HEK293 (cell line): ENCODE measurements at regions of chr14 and their contacts with region 1.

Region 1: DNA sequence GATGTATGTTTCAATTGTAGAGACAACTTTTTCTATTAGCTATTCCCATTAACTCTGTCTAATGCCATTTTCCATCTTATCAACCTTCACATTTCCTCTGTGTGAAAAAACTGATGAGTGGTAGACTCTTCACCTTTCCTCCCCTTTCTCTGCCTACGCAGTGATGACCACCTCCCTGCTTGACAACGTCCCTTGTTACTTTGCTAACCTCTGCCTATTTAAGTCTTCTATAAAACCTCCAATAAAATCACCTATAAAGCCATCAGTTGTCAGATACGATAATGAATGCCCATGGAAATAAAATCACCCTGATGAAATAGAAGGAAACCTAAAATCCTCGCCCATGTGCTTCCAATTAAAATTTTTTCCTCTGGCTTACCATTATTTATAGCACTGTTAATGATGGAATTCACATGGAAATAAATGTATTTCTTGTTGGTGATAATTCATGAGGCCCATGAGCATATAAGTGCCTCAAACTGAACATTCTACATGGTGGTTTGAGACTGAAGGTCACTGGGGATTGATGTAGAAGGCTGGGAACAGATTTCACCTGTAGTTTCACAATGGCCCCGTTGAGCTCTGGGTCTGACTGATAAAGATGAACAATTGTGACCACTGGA is 1454.0 kb upstream of the SEL1L start:
- H3K4me3 ChIP-seq: no peak overlapping the region
- H3K27ac ChIP-seq: no peak overlapping the region
- H3K4me1 ChIP-seq: no peaks in the 10 kb centered on the region
- CTCF ChIP-seq: no peak

Region 2: GRCh38 chr14:82905762-82906161 is 81.9 kb before region 1 on chr14:
- CTCF ChIA-PET with region 1: no interaction called
- POLR2A ChIA-PET with region 1: no interaction called
- H3K4me3 ChIP-seq: no peak overlapping the region
- H3K27ac ChIP-seq: no peak overlapping the region
- H3K4me1 ChIP-seq: no peaks in the 10 kb centered on the region
- CTCF ChIP-seq: no peak

Region 3: DNA sequence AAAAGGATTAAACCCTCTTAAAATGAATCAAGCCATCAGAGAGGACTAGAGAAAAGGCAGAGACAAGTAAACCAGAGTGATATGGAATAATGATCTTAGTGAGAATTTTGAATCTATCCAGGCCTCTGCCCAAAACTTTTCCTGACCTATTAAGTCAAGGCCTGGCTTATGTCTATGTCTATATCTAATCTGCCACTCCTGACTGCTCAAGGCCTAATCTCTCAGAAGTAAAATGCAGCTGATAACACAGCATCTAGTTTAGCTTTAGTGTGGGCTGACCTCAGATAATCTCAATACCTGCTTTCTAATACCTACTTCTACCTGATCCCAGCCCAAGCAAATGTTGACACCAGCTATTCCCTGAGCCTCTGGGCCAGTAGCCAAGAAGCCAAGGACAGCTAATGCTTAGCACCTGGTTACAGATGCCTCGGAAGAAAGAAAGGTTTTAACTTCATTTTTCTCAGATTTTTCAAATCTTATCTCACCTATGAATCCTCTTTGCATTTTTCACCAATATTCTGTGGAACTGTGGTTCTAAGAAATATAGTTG is 18.6 kb after region 1 on chr14:
- CTCF ChIA-PET with region 1: no interaction called
- POLR2A ChIA-PET with region 1: no interaction called
- H3K4me3 ChIP-seq: no peak overlapping the region
- H3K27ac ChIP-seq: no peak overlapping the region
- H3K4me1 ChIP-seq: no peaks in the 10 kb centered on the region
- CTCF ChIP-seq: no peak

Region 4: GRCh38 chr14:83491091-83491490 is 503.5 kb after region 1 on chr14:
- CTCF ChIA-PET with region 1: no interaction called
- POLR2A ChIA-PET with region 1: interaction called, 10 read pairs
- H3K4me3 ChIP-seq: no peak overlapping the region
- H3K27ac ChIP-seq: no peak overlapping the region
- H3K4me1 ChIP-seq: no peaks in the 10 kb centered on the region
- CTCF ChIP-seq: no peak